K562 (cell line): ENCODE measurements at regions of chr13 and their contacts with region 1.

Region 1: DNA sequence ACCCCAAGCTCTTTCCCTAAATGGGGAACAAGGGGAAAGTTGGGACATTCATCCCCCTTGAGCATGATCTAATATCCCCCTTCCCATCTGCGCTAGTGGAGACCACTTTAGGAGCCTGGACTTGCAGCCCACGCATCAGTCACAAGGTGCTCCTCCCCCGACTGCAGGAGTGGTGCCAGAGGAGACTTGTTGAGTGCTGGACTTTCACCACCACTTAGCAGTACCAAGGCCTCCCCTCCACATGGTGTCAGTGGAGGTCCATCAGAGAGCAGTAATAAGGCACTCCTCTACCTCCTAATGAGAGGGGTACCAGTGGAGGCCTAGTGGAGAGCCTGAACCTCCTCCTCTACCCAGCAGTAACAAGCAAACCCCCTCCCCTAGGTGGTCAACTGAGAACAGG is 22.5 kb downstream of the CAB39L start:
- DNase-seq: peak; percentile 7 to 55 (median 24)
- ATAC-seq: peak; percentile 96
- H3K4me3 ChIP-seq: no peak overlapping the region
- H3K27ac ChIP-seq: no peak overlapping the region
- H3K4me1 ChIP-seq: no peaks in the 10 kb centered on the region
- H3K27me3 ChIP-seq: no peaks in the 10 kb centered on the region
- CTCF ChIP-seq: peak; percentile 33 to 47 (median 38); a peak in 3 of 6 replicates
- EP300 ChIP-seq: no peak
- POLR2A ChIP-seq: no peak
- RAD21 ChIP-seq: peak in 1 of 2 experiments; percentile 58; a peak in 2 of 4 replicates

Region 2: GRCh38 chr13:49348751-49349150 is 72.6 kb before region 1 on chr13:
- CTCF ChIA-PET with region 1: no interaction called
- POLR2A ChIA-PET with region 1: no interaction called
- in situ Hi-C with region 1: no loop called
- intact Hi-C with region 1: loop called (anchors 10 kb)
- DNase-seq: peak in 2 of 4 experiments; percentile 9 to 10
- ATAC-seq: peak; percentile 79
- H3K4me3 ChIP-seq: no peak overlapping the region
- H3K27ac ChIP-seq: no peak overlapping the region
- H3K4me1 ChIP-seq: no peaks in the 10 kb centered on the region; a peak in 1 of 5 replicates
- H3K27me3 ChIP-seq: no peaks in the 10 kb centered on the region
- CTCF ChIP-seq: no peak
- EP300 ChIP-seq: no peak
- POLR2A ChIP-seq: no peak
- RAD21 ChIP-seq: no peak

Region 3: GRCh38 chr13:49996951-49997895 is 575.8 kb after region 1 on chr13 and contains the start of gene TRIM13:
- CTCF ChIA-PET with region 1: no interaction called
- POLR2A ChIA-PET with region 1: no interaction called
- in situ Hi-C with region 1: no loop called
- intact Hi-C with region 1: no loop called
- DNase-seq: peak in 2 of 4 experiments; percentile 56 to 90
- ATAC-seq: peak; percentile 89
- H3K4me3 ChIP-seq: peak within 1 kb of the TSS; percentile 87
- H3K27ac ChIP-seq: peak within 1 kb of the TSS; percentile 98
- H3K4me1 ChIP-seq: peaks cover 5 to 7% of the 10 kb centered on the region in 2 experiments; a peak in 4 of 5 replicates
- H3K27me3 ChIP-seq: no peaks in the 10 kb centered on the region
- CTCF ChIP-seq: peak; percentile 78 to 93 (median 79)
- EP300 ChIP-seq: no peak
- POLR2A ChIP-seq: peak; percentile 88
- RAD21 ChIP-seq: peak; percentile 40 to 61
- polyA plus RNA-seq, gene TRIM13: 19.9 to 24.8 TPM